GM10248 (cell line): ENCODE measurements at regions of chr10 and their contacts with region 1.

Region 1: DNA sequence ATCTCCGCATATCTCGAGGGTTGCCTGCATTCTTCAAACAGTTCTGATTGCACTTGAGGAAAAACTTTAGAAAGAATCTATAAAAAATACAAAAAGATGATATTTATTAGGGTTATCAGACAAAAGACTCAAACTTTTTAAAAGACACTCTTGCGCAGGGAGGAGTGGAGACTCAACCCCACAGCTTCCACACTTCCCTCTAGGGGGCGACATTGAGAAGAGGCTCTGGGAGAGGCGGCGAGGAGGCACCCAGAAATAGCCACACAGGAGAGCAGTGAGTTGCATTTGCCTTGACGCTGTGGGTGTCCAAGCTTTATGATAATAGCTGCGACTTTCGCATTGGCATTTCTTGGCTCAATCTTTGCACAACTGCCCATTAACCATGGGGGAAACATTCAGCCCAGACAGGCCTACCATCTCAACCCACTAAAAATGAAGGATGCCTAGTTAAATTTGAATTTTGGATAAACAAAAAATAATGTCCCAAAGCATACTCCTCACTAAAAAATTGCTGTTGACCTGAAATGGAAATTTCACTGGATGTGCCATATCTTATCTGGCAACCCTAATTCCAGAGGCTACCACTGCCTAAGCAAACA is 86.2 kb downstream of the EBF3 start:
- DNase-seq: peak; percentile 39
- CTCF ChIP-seq: peak; percentile 49

Region 2: DNA sequence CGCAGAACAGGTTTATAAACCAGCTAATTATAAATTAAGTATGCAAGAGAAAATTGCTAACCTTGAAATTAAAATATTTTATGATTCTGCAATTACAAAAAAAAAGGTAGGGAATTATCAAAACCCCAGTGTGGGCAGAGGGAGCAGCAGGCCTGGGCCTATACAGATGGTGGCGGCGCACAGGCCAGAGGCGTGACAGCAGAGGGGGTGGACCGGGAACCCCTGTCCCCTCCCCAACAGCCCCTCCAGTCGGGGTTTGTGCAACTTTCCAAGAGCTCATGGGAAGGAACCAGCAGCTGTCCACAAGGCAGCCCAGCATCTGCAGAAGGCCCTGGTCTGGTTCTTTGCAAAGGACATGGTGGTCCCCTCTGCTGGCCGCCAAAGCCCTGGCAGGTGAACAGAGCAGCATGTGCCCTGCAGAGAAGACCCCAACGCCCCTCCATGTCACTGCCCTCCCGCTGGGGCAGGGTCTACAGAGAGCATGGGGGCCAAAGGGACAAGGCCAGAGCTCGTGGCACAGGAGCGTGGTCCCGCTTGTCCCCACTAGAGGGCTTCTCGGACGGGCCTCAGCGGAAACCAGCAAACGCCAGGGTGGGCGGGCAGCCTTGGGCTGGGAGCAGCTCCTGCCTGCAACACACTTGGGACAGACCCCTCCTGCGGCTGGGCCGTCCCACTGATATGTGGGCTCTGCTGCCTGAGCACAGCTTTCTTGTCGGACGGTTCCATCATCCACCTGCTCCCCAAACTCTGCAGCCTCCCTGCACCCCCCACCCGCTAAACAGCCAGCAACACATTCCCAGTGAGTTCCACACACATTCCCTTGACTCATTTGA is 11.1 kb after region 1 on chr10:
- CTCF ChIA-PET with region 1: interaction called, 24 read pairs
- POLR2A ChIA-PET with region 1: no interaction called
- DNase-seq: peak; percentile 74
- CTCF ChIP-seq: peak; percentile 47

Region 3: GRCh38 chr10:129915526-129916378 is 37.9 kb after region 1 on chr10:
- CTCF ChIA-PET with region 1: no interaction called
- POLR2A ChIA-PET with region 1: no interaction called
- DNase-seq: no peak
- CTCF ChIP-seq: no peak